KBM-7 (cell line): ENCODE measurements at regions of chr4 and their contacts with region 1.

Region 1: GRCh38 chr4:48093949-48094550 is 40.0 kb downstream of the TXK start:
- DNase-seq: no peak

Region 2: GRCh38 chr4:47686294-47686872 is 407.7 kb before region 1 on chr4:
- in situ Hi-C with region 1: loop called (anchors 25 kb)
- DNase-seq: peak; percentile 79